ENCODE measurements at regions of chr17 and their contacts with region 1.

Region 1: DNA sequence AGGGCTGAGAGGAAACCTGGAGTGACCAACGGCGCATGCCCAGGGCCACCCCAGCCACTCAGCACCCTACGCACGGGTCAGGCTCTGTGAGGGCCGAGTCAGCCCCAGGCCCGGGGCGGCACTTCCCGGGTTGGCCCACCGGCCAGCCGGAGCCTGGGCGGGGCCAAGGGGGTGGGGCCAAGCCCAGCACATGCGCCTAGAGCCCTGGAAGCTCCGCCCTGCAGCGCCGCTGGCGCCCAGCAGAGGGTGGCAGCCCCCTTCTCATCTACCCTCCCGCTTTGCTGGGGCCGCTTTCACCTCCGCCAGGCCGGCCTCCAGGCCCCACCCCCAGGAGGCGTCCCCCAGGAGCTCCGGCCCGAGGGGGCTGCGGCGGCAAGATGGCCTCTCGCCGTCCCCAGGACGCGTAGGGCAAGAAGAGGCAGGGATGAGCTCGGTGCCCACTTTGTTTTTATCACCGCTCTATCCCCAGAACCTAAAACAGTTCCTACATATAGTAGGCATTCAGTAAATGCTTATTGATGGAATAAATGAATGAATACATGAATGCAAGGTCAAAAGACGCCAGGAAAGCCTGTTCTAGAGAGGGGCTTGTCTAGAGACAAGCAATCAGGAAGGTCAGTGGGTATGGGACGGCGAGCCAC is 31.3 kb downstream of the MYO18A start:
- DNase-seq: peak; percentile 98
- ATAC-seq: peak; percentile 97
- H3K4me3 ChIP-seq: peak overlapping the region; percentile 58
- H3K27ac ChIP-seq: peak overlapping the region; percentile 88
- H3K4me1 ChIP-seq: peaks cover 45% of the 10 kb centered on the region
- H3K27me3 ChIP-seq: no peaks in the 10 kb centered on the region
- CTCF ChIP-seq: peak; percentile 98

Region 2: GRCh38 chr17:29219378-29220047 is 70.6 kb after region 1 on chr17:
- intact Hi-C with region 1: loop called (anchors 5 kb)
- DNase-seq: peak; percentile 79
- ATAC-seq: peak; percentile 95
- H3K4me3 ChIP-seq: no peak overlapping the region
- H3K27ac ChIP-seq: no peak overlapping the region
- H3K4me1 ChIP-seq: peaks cover 6% of the 10 kb centered on the region
- H3K27me3 ChIP-seq: no peaks in the 10 kb centered on the region
- CTCF ChIP-seq: peak; percentile 98

Measured in upper lobe of right lung (tissue), 1 donor.